Calu3 (cell line): ENCODE measurements at regions of chr1 and their contacts with region 1.

Region 1: GRCh38 chr1:60281360-60281932 is 207.9 kb upstream of the C1orf87 start:
- DNase-seq: peak; percentile 66
- H3K4me3 Mint-ChIP-seq: no peak overlapping the region
- H3K27ac Mint-ChIP-seq: peak overlapping the region; percentile 30
- H3K4me1 Mint-ChIP-seq: peaks cover 22% of the 10 kb centered on the region
- H3K27me3 Mint-ChIP-seq: no peaks in the 10 kb centered on the region
- CTCF ChIP-seq: peak; percentile 79

Region 2: GRCh38 chr1:60185684-60186083 is 95.8 kb before region 1 on chr1:
- CTCF ChIA-PET with region 1: no interaction called
- intact Hi-C with region 1: no loop called
- DNase-seq: no peak
- H3K4me3 Mint-ChIP-seq: no peak overlapping the region
- H3K27ac Mint-ChIP-seq: no peak overlapping the region
- H3K4me1 Mint-ChIP-seq: no peaks in the 10 kb centered on the region
- H3K27me3 Mint-ChIP-seq: no peaks in the 10 kb centered on the region
- CTCF ChIP-seq: no peak

Region 3: DNA sequence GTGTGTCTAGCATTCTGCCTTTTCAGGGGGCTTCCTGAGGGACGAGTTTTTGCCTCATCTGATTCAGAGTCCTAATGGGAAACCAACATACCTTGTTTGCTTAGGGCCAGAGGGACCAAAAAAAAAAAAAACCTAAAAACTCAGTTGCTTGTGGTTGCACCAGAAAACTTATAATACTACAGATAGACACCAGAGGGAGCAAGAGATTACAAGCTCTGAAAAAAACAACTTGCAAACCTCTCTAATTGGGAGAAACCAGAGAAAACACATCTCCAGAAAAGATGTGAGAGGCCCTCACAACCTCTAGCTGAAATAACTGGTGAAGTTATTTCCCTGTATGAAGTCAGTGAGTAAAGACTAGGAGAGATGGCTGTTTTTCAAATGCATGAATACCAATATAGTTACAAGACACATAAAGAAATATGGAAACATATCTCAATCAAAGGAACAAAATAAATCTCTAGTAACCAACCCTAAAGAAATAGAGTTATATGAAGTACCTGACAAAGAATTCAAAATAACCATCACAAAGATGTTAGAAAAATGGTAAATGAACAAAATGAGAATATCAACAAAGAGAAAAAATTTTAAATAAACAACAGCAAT is 567.2 kb after region 1 on chr1:
- CTCF ChIA-PET with region 1: interaction called, 4 read pairs
- intact Hi-C with region 1: loop called (anchors 2 kb)
- DNase-seq: no peak
- H3K4me3 Mint-ChIP-seq: no peak overlapping the region
- H3K27ac Mint-ChIP-seq: peak overlapping the region; percentile 49
- H3K4me1 Mint-ChIP-seq: peaks cover 20% of the 10 kb centered on the region
- H3K27me3 Mint-ChIP-seq: no peaks in the 10 kb centered on the region
- CTCF ChIP-seq: peak; percentile 60

Region 4: DNA sequence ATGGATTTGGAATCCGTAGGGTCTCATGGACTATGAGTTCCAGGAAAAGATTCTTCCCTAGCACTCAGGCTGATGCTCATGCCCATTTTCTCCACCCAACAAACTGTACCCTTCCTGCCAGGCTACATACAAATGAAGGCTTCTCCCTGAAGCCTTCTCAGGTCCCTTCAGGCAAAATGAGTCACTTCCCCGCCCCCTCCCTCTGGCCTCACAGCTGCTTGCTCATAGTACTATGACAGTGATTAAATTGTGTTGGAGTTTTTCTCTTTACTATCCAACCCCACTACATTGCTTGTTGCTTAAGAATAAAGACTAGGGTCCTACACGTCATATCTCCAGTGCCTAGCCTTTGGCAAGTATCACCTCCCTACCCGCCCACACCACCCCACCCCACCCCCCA is 593.3 kb after region 1 on chr1:
- CTCF ChIA-PET with region 1: no interaction called
- intact Hi-C with region 1: no loop called
- DNase-seq: peak; percentile 17
- H3K4me3 Mint-ChIP-seq: no peak overlapping the region
- H3K27ac Mint-ChIP-seq: no peak overlapping the region
- H3K4me1 Mint-ChIP-seq: peaks cover 7% of the 10 kb centered on the region
- H3K27me3 Mint-ChIP-seq: no peaks in the 10 kb centered on the region
- CTCF ChIP-seq: no peak